ENCODE measurements at regions of chr16 and their contacts with region 1.

Region 1: DNA sequence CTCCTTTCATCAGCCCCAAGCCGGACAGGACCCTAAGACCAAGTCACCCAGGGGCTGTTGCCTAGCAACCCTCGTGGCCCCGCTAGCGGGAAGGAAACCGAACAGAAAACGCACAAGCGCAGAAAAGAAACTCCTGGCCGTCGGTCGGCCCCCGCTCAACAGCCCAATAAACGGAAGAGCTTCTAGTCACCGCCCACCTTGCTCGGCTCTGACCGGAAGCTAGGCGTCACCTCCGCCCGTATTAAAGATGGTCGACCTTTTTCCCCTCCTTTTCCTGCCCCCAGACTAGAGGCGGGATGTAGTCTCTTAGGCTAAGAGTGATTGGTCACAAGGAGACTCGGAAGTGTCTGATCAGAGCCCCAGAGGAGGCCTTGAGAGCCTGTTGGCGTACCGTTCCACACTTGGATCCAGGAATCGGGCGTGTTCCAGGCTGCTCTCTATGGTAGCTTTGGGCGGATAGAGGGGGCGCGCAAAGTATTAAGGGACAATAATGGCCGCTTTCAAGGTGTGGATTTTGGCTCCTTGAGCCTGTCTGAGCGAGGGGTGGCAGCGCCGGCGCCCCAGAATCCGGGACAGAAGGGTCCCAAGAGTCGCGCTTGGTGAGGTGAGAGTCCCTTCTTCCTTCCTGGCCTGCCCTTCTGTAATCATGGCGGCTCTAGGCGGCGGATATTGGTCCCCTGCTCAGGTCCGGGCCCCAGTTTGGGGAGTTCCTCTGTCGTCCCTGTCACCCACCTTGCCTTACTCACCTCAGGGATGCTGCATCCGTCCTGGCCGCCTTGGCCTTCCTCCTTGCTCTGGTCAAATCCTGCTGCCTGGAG is at the starts of genes DHX38 and TXNL4B:
- DNase-seq: peak; percentile 92
- H3K4me3 Mint-ChIP-seq: peak within 1 kb of the TSS; percentile 98
- H3K27ac Mint-ChIP-seq: peak within 1 kb of the TSS; percentile 99
- H3K4me1 Mint-ChIP-seq: peaks cover 36% of the 10 kb centered on the region
- H3K27me3 Mint-ChIP-seq: no peaks in the 10 kb centered on the region
- total RNA-seq, gene DHX38: 86.3 and 95.8 TPM in 2 replicates
- total RNA-seq, gene TXNL4B: 16.5 and 17.1 TPM in 2 replicates

Region 2: GRCh38 chr16:70653809-70654771 is 1439.6 kb before region 1 on chr16:
- intact Hi-C with region 1: no loop called
- DNase-seq: peak; percentile 74
- H3K4me3 Mint-ChIP-seq: peak overlapping the region; percentile 44
- H3K27ac Mint-ChIP-seq: no peak overlapping the region
- H3K4me1 Mint-ChIP-seq: peaks cover 5% of the 10 kb centered on the region
- H3K27me3 Mint-ChIP-seq: peaks cover 1% of the 10 kb centered on the region

Region 3: GRCh38 chr16:71564155-71564967 is 529.3 kb before region 1 on chr16:
- intact Hi-C with region 1: loop called (anchors 2 kb)
- DNase-seq: no peak
- H3K4me3 Mint-ChIP-seq: peak overlapping the region; percentile 89
- H3K27ac Mint-ChIP-seq: peak overlapping the region; percentile 90
- H3K4me1 Mint-ChIP-seq: peaks cover 11% of the 10 kb centered on the region
- H3K27me3 Mint-ChIP-seq: peaks cover 3% of the 10 kb centered on the region

Region 4: GRCh38 chr16:71808593-71809459 is 284.8 kb before region 1 on chr16 and contains the start of gene AP1G1:
- intact Hi-C with region 1: loop called (anchors 1 kb)
- DNase-seq: peak; percentile 91
- H3K4me3 Mint-ChIP-seq: peak within 1 kb of the TSS; percentile 95
- H3K27ac Mint-ChIP-seq: peak within 1 kb of the TSS; percentile 100
- H3K4me1 Mint-ChIP-seq: peaks cover 16% of the 10 kb centered on the region
- H3K27me3 Mint-ChIP-seq: no peaks in the 10 kb centered on the region
- total RNA-seq, gene AP1G1: 90.6 and 91.6 TPM in 2 replicates

Region 5: GRCh38 chr16:72008424-72009216 is 85.0 kb before region 1 on chr16 and contains the start of gene DHODH:
- intact Hi-C with region 1: loop called (anchors 1 kb)
- DNase-seq: peak; percentile 98
- H3K4me3 Mint-ChIP-seq: peak within 1 kb of the TSS; percentile 95
- H3K27ac Mint-ChIP-seq: peak within 1 kb of the TSS; percentile 90
- H3K4me1 Mint-ChIP-seq: peaks cover 17% of the 10 kb centered on the region
- H3K27me3 Mint-ChIP-seq: no peaks in the 10 kb centered on the region
- total RNA-seq, gene DHODH: 26.7 and 27.1 TPM in 2 replicates

Region 6: DNA sequence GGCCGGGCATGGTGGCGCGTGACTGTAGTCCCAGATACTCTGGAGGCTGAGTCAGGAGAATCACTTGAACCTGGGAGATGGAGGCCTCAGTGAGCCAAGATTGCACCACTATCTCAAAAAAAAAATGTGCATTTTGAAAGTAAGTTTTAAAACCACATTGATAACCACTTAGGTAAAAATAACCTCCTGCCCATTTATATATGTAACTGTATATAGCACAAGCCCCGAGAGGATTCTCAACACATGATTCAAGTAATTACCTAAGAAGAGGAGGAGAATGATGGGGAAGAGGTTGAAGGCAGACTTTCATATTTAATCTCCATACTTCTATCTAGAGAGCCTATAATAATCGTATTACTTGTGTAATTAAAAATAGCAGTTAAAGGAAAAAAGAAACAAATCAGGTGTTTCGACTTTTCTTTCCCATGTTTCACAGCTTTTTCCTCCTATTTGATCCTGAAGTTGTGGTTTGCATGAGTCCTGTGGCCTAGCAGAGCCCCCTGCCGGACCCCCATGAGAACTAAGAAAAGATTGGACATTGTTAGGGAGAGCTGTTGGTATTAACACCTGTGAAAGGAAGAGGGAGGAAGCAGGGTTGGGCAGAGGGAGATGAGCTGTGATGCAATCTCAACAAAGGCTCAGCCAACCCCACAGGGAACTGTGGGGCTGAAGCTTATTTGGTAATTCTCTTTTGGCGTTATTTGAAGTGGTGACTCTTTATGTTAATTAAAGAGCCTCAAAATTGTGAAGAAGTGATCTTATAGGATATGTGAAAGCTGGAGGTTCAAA is 56.2 kb after region 1 on chr16:
- intact Hi-C with region 1: no loop called
- DNase-seq: no peak
- H3K4me3 Mint-ChIP-seq: no peak overlapping the region
- H3K27ac Mint-ChIP-seq: no peak overlapping the region
- H3K4me1 Mint-ChIP-seq: no peaks in the 10 kb centered on the region
- H3K27me3 Mint-ChIP-seq: no peaks in the 10 kb centered on the region

Region 7: DNA sequence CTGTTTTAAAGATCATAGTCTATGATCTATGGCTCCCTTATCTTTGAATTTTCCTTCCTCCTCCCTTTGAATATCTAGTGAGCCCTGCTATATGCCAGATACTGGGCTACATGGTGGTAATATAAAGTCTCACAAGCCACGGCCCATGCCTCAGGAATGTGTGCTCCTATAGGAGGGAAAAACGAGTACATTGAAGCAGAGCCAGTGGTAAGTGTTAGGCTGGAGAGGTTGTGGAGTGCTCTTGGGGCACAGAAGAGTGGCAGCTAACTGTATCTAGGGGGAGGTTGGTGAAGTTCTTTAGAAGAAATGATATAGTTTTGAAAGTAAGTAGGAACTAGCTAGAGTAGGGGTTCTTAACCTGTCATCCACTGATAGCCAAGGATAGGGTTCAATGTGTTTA is 184.1 kb after region 1 on chr16:
- intact Hi-C with region 1: no loop called
- DNase-seq: no peak
- H3K4me3 Mint-ChIP-seq: no peak overlapping the region
- H3K27ac Mint-ChIP-seq: no peak overlapping the region
- H3K4me1 Mint-ChIP-seq: no peaks in the 10 kb centered on the region
- H3K27me3 Mint-ChIP-seq: no peaks in the 10 kb centered on the region

Measured in activated T-helper 2 cell treated with anti-CD3 and anti-CD28 coated beads, Interferon-gamma antibody, Interleukin-2, Interleukin-4, amounts not matched to agents 10 μg/mL and 5 μg/mL and 100 μg/mL, durations not matched to agents 14 hours and 24 hours and 36 hours (primary cell).